HCT116 (cell line): ENCODE measurements at regions of chr5 and their contacts with region 1.

Region 1: GRCh38 chr5:53035868-53036381 is 46.8 kb downstream of the ITGA2 start:
- DNase-seq: no peak
- ATAC-seq: peak; percentile 70
- H3K4me3 ChIP-seq: no peak overlapping the region
- H3K27ac ChIP-seq: no peak overlapping the region
- H3K4me1 ChIP-seq: peaks cover 52 to 76% of the 10 kb centered on the region in 2 experiments
- H3K27me3 ChIP-seq: no peaks in the 10 kb centered on the region
- CTCF ChIP-seq: peak; percentile 14 to 74 (median 61); a peak in 5 of 6 replicates
- POLR2A ChIP-seq: no peak
- RAD21 ChIP-seq: 0 out of 2 replicates have a peak, but pooled peaks have one; percentile 23

Region 2: GRCh38 chr5:52543594-52543993 is 492.3 kb before region 1 on chr5:
- CTCF ChIA-PET with region 1: no interaction called
- POLR2A ChIA-PET with region 1: no interaction called
- RAD21 ChIA-PET with region 1: no interaction called
- intact Hi-C with region 1: no loop called
- DNase-seq: no peak
- ATAC-seq: no peak
- H3K4me3 ChIP-seq: no peak overlapping the region
- H3K27ac ChIP-seq: no peak overlapping the region
- H3K4me1 ChIP-seq: no peaks in the 10 kb centered on the region
- H3K27me3 ChIP-seq: no peaks in the 10 kb centered on the region
- CTCF ChIP-seq: no peak
- POLR2A ChIP-seq: no peak
- RAD21 ChIP-seq: no peak

Region 3: DNA sequence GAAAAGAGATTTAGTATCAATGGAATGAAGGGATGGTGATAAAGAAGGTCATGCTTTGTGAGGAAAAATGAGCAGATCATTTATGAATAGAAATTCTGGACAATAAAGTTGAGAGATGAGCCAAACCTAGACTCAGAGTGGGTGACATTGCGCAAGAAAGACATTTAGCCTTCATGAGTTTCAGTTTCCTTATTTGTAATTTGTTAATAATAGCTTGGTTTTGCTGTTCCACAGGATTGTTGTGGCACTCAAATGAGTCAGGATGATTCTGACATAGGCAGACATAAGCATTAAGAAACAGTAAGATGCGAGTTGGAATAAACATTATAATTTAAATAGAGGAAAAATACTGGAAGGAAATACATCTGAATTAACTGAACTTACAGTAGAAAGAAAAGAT is 12.0 kb before region 1 on chr5:
- CTCF ChIA-PET with region 1: interaction called, 20 read pairs
- POLR2A ChIA-PET with region 1: interaction called, 3 read pairs
- RAD21 ChIA-PET with region 1: no interaction called
- intact Hi-C with region 1: no loop called
- DNase-seq: no peak
- ATAC-seq: no peak
- H3K4me3 ChIP-seq: no peak overlapping the region
- H3K27ac ChIP-seq: no peak overlapping the region
- H3K4me1 ChIP-seq: peaks cover 17 to 19% of the 10 kb centered on the region in 2 experiments; a peak in 3 of 4 replicates
- H3K27me3 ChIP-seq: no peaks in the 10 kb centered on the region
- CTCF ChIP-seq: no peak
- POLR2A ChIP-seq: no peak
- RAD21 ChIP-seq: no peak